ENCODE measurements at regions of chr9 and their contacts with region 1.

Region 1: GRCh38 chr9:95004411-95005277 is 278.1 kb downstream of the AOPEP start:
- DNase-seq: no peak
- H3K4me3 ChIP-seq: peak overlapping the region; percentile 81 to 83
- H3K27ac ChIP-seq: peak overlapping the region; percentile 99 to 100
- H3K4me1 ChIP-seq: peaks cover 0 to 24% of the 10 kb centered on the region in 2 donors
- H3K27me3 ChIP-seq: no peaks in the 10 kb centered on the region
- CTCF ChIP-seq: peak in 1 of 3 experiments; percentile 10

Region 2: DNA sequence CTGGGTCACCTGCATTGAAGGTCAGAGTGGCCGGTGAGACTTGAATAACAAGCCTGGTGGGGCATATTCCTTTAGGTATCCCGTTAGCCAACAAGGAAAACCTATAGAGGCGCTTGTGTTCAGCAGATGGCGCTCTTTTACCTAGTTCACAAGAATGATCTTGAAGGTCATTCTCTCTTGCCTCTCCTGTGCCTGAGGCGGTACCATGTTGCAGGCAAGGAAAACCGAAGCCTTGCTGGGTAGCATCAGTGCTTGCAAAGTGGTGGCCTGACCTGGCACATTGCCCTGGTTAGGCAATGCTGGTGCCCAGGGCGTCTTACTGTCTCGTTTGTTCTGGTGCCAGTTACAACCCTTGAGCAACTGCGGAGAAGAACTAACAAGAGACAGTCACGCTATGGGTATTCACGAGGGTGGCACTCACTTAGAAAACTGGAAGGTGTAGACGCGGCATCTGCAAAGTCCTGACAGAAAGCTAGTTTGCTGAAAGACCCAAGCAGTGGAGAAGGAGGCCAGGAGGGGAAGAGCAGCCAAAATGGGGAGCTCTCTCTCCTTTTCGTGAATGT is 221.5 kb before region 1 on chr9:
- intact Hi-C with region 1: loop called (anchors 2 kb)
- DNase-seq: peak in 1 of 2 donors; percentile 91
- H3K4me3 ChIP-seq: no peak overlapping the region
- H3K27ac ChIP-seq: peak overlapping the region; percentile 83 to 84
- H3K4me1 ChIP-seq: peaks cover 0 to 34% of the 10 kb centered on the region in 2 donors
- H3K27me3 ChIP-seq: no peaks in the 10 kb centered on the region
- CTCF ChIP-seq: peak; percentile 64 to 69 (median 68)

Region 3: DNA sequence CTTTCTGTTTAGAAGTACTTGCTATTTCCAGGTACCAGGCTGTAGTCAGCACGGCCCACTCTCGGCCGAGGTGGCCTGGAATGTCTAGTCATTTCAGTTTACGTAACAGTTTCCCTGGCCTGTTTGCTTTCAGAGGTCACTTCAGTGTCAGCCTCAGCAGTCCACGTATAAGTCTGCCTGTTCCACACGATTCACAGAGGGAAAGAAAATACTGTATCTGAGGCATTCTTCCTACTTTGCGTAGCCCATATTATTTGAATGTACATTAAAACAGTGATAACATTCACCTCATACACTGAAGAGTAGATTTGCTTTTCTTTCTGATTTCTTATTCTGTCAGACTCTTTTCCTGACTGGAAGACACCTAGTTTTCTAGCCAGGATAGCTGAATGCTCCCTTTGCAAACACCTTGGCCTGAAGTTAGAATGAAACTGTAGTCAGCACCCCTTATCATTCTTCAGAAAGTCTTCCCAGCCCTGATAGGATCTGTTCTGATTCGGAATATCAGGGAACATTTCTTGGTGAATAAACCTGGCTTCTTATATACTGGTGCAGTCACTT is 137.3 kb before region 1 on chr9:
- intact Hi-C with region 1: loop called (anchors 5 kb)
- DNase-seq: peak; percentile 39 to 85
- H3K4me3 ChIP-seq: peak overlapping the region; percentile 2 to 31
- H3K27ac ChIP-seq: peak overlapping the region; percentile 80 to 83
- H3K4me1 ChIP-seq: peaks cover 13 to 54% of the 10 kb centered on the region in 2 donors
- H3K27me3 ChIP-seq: no peaks in the 10 kb centered on the region
- CTCF ChIP-seq: no peak

Region 4: GRCh38 chr9:94922098-94922607 is 82.5 kb before region 1 on chr9:
- intact Hi-C with region 1: loop called (anchors 2 kb)
- DNase-seq: peak in 1 of 2 donors; percentile 93
- H3K4me3 ChIP-seq: peak overlapping the region in 1 of 2 donors; percentile 45
- H3K27ac ChIP-seq: peak overlapping the region; percentile 91 to 97
- H3K4me1 ChIP-seq: peaks cover 9 to 59% of the 10 kb centered on the region in 2 donors
- H3K27me3 ChIP-seq: no peaks in the 10 kb centered on the region
- CTCF ChIP-seq: no peak

Region 5: DNA sequence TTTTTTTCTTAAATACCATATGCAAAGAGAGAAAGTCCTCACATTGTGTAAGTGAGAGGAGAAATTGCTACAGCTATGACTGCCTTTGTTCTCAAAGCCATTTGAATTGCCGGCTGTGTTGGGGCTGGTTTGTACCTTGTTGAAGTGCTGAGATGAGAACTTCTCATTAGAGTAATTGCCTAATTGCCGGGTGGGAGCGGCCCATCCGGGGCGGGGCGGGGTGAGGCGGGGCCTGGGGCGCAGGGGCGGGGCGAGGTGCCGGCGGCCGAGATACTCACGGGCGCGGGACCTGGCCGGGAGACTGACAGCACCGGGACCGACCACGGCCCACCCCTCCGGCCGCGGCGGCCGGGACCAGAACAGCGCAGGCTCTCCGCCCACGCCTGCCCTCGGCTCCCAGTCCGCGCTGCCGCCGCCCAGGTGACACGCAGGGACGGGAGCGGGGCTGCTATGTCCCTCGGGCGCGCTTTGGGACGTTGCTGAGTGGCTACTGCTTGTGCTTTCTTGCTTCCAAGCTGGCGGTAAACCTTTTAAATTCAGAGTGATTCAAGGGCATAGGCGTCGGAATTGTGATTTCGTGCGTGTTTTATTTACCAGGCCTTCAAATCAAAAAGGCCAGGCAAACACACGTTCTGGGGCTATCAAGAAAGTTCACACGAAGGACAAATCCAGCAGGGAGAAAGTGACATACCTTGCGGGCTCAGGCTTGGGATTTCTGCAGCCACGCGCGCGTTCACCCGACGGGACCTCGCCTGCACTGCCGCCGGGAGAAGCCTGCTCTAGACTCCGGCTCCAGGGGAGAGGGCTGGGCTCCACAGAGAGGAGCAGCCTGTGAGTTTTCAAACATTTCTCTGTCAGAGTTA is 43.8 kb after region 1 on chr9:
- intact Hi-C with region 1: loop called (anchors 5 kb)
- DNase-seq: peak in 1 of 2 donors; percentile 74
- H3K4me3 ChIP-seq: peak overlapping the region; percentile 54 to 67
- H3K27ac ChIP-seq: peak overlapping the region; percentile 84 to 95
- H3K4me1 ChIP-seq: peaks cover 16 to 46% of the 10 kb centered on the region in 2 donors
- H3K27me3 ChIP-seq: no peaks in the 10 kb centered on the region
- CTCF ChIP-seq: no peak

Region 6: DNA sequence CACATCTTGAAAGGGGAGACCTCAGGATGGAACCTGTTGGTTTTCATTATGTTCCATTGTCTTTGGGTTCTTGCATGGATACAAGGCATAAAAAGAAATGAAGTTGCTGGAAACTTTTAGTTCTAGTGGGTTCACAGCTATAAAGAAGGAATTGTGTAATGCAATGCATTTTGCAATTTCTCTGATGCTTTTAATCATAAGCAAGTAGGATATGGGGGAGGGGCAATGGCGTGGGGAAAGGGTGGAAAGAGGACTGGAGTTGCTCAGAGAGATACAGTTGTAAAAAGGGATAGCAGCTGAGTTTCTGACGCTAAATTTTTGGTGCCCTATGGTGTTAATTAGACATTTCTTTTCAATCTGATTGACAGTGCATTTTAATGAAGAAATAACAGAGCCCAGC is 401.5 kb after region 1 on chr9:
- intact Hi-C with region 1: no loop called
- DNase-seq: no peak
- H3K4me3 ChIP-seq: no peak overlapping the region
- H3K27ac ChIP-seq: no peak overlapping the region
- H3K4me1 ChIP-seq: no peaks in the 10 kb centered on the region
- H3K27me3 ChIP-seq: no peaks in the 10 kb centered on the region
- CTCF ChIP-seq: no peak

Measured in ascending aorta (tissue), 2 donors.